Activated B cell treated with CpG ODN at 0.5 μM for 24 hours (primary cell): ENCODE measurements at regions of chr4 and their contacts with region 1.

Region 1: GRCh38 chr4:173538148-173538908 is 8.3 kb upstream of the HAND2 start:
- DNase-seq: no peak
- ATAC-seq: no peak
- H3K4me3 Mint-ChIP-seq: peak overlapping the region; percentile 71
- H3K27ac Mint-ChIP-seq: no peak overlapping the region
- H3K4me1 Mint-ChIP-seq: peaks cover 14% of the 10 kb centered on the region
- H3K27me3 Mint-ChIP-seq: peaks cover 69% of the 10 kb centered on the region
- CTCF ChIP-seq: no peak

Region 2: DNA sequence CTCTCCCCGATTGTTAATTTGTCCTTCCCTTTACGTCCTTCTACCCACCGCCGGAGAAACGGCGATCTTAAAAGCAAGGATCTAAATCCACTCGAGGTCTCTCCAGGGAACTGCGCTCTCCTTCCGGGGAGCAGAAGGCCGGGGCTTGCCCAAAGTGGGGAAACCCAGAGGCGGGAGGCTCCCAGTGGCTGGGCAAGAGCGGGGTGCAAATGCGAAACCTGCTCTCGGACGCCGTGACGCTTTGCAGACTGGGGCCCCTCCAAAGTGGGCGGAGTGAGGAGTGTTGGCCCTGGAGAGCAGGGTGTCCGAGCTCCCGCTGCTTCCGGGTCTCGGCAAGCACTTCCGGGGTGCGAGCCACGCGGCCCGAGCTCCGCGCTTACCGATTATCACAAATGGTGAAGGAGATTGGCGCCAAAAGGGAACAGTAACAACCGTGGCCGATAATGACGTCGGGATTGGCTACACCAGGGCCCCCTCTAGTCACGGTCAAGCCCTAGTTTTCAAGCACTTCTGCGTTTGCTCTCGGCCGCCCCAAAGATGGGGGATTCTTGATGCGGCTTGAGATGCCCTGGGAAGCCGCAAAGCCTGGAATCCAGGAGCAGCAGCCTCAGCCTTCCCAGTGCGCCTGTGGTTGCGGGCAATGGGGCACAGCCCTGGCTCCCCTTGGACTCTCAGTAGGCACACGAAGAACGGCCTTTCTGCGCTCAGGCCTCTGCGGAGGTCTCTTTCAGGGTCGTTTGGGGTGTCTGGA is 37.3 kb before region 1 on chr4:
- CTCF ChIA-PET with region 1: no interaction called
- POLR2A ChIA-PET with region 1: no interaction called
- intact Hi-C with region 1: loop called (anchors 5 kb)
- DNase-seq: no peak
- ATAC-seq: peak; percentile 28
- H3K4me3 Mint-ChIP-seq: peak overlapping the region; percentile 79
- H3K27ac Mint-ChIP-seq: no peak overlapping the region
- H3K4me1 Mint-ChIP-seq: peaks cover 38% of the 10 kb centered on the region
- H3K27me3 Mint-ChIP-seq: peaks cover 53% of the 10 kb centered on the region
- CTCF ChIP-seq: no peak

Region 3: DNA sequence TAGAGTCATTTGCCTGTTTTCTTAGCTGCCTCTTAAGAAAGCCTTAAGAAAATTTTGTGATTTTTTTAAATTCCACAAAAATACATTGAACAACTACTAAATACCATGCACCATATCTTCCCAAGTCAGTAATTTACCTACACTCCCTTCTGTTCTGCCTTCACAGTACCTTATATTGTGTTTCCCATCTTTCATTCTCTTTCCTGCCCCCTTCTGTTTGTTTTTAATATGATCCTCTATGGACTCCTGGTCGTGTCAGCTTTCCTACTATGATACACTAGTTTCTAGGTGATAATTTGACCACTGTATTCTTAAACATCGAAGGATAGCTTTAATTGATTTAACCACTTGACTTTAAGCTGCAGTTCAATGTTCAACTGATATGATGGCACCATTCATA is 289.4 kb after region 1 on chr4:
- CTCF ChIA-PET with region 1: no interaction called
- POLR2A ChIA-PET with region 1: no interaction called
- intact Hi-C with region 1: no loop called
- DNase-seq: no peak
- ATAC-seq: no peak
- H3K4me3 Mint-ChIP-seq: no peak overlapping the region
- H3K27ac Mint-ChIP-seq: no peak overlapping the region
- H3K4me1 Mint-ChIP-seq: no peaks in the 10 kb centered on the region
- H3K27me3 Mint-ChIP-seq: peaks cover 8% of the 10 kb centered on the region
- CTCF ChIP-seq: no peak